Naive thymus-derived CD4-positive, alpha-beta T cell (primary cell): ENCODE measurements at regions of chr3 and their contacts with region 1.

Region 1: GRCh38 chr3:194134757-194135528 is 1.0 kb upstream of the HES1 start:
- DNase-seq: peak; percentile 66 to 84 (median 82)
- ATAC-seq: peak; percentile 79
- H3K4me3 ChIP-seq: peak overlapping the region; percentile 53
- H3K4me3 Mint-ChIP-seq: peak overlapping the region; percentile 84 to 93 (median 90)
- H3K27ac ChIP-seq: peak overlapping the region; percentile 8
- H3K27ac Mint-ChIP-seq: peak overlapping the region in 8 of 9 donors; percentile 79 to 94 (median 92)
- H3K4me1 ChIP-seq: peaks cover 25 to 42% of the 10 kb centered on the region in 2 donors
- H3K4me1 Mint-ChIP-seq: peaks cover 41 to 66% (median 50%) of the 10 kb centered on the region in 7 donors
- H3K27me3 ChIP-seq: peaks cover 6 to 8% of the 10 kb centered on the region in 2 donors
- H3K27me3 Mint-ChIP-seq: peaks cover 0 to 80% (median 34%) of the 10 kb centered on the region in 5 donors

Region 2: GRCh38 chr3:193592944-193593667 is 541.8 kb before region 1 on chr3 and contains the start of gene OPA1:
- CTCF ChIA-PET with region 1: no interaction called
- POLR2A ChIA-PET with region 1: no interaction called
- intact Hi-C with region 1: loop called (anchors 5 kb)
- DNase-seq: peak; percentile 73 to 91 (median 80)
- ATAC-seq: peak; percentile 96
- H3K4me3 ChIP-seq: peak within 1 kb of the TSS; percentile 78
- H3K4me3 Mint-ChIP-seq: peak within 1 kb of the TSS; percentile 93 to 98 (median 96)
- H3K27ac ChIP-seq: peak within 1 kb of the TSS; percentile 82
- H3K27ac Mint-ChIP-seq: peak within 1 kb of the TSS; percentile 92 to 98 (median 95)
- H3K4me1 ChIP-seq: peaks cover 18 to 20% of the 10 kb centered on the region in 2 donors
- H3K4me1 Mint-ChIP-seq: peaks cover 40 to 70% (median 59%) of the 10 kb centered on the region in 7 donors
- H3K27me3 ChIP-seq: no peaks in the 10 kb centered on the region
- H3K27me3 Mint-ChIP-seq: no peaks in the 10 kb centered on the region
- total RNA-seq, gene OPA1: 50.7 to 70.0 (median 59.4) TPM

Region 3: DNA sequence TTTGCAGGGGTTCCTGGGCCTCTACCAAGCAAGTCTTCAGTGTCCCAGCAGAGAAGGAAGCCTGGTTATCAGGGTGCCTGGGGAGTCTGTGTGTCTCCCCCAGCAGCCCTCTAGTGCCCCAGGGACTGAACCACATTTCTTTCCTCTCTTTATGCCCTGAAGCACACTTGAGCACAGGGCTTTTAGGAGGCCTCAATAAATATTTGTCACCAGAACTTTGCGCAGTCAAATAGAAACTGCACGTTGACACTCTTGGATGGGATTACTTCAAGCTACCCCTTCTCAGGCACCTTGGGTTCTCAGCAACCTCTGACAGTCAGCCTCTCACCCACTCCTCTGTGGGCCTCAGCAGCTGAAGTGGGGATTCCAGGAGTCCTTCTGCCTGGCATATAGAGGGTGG is 225.6 kb before region 1 on chr3:
- CTCF ChIA-PET with region 1: no interaction called
- POLR2A ChIA-PET with region 1: no interaction called
- intact Hi-C with region 1: no loop called
- DNase-seq: no peak
- ATAC-seq: no peak
- H3K4me3 ChIP-seq: no peak overlapping the region
- H3K4me3 Mint-ChIP-seq: no peak overlapping the region
- H3K27ac ChIP-seq: no peak overlapping the region
- H3K27ac Mint-ChIP-seq: peak overlapping the region in 4 of 9 donors; percentile 22 to 86 (median 50)
- H3K4me1 ChIP-seq: peaks cover 12 to 19% of the 10 kb centered on the region in 2 donors
- H3K4me1 Mint-ChIP-seq: peaks cover 12 to 41% (median 34%) of the 10 kb centered on the region in 7 donors
- H3K27me3 ChIP-seq: no peaks in the 10 kb centered on the region
- H3K27me3 Mint-ChIP-seq: peaks cover 0 to 6% (median 0%) of the 10 kb centered on the region in 5 donors

Region 4: DNA sequence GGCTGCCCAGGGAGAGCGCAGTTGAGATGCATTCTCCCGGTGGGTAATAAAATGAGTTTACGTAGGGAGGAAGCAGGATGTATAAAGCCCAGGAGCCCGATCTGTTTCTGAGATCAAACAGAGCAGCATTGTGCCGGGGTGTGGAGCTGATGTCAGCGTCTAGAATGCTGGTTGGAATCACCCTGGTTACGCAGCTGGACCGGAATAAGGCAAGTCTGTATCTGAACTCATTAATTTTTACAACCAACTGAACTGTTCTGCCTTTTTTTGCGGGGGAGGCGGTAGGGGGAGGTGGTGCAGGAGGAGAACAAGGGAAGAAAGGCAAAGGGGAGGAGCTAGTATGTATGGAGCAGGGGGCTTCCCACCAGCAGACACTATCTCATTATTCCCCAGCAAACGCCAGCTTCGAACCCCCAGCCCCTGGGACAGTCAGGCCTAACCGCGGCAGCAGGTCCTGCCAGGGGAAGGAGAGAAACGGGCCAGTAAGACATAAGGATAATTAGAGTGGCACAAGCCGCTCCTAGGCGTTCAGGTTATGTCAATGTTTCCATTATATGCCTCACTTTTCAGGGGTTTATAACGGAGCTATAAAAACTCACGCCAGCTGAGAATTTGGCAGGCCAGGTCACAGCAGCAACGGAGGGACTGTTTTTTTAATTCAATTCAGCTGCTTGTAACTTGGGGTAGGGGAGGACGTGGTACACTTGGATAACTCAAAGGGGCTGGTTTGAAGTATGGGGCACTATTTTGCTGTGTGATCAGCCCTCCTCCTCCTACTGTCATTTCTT is 174.3 kb before region 1 on chr3:
- CTCF ChIA-PET with region 1: no interaction called
- POLR2A ChIA-PET with region 1: no interaction called
- intact Hi-C with region 1: loop called in 1 of 2 experiments (anchors 10 kb)
- DNase-seq: no peak
- ATAC-seq: no peak
- H3K4me3 ChIP-seq: no peak overlapping the region
- H3K4me3 Mint-ChIP-seq: no peak overlapping the region
- H3K27ac ChIP-seq: no peak overlapping the region
- H3K27ac Mint-ChIP-seq: no peak overlapping the region
- H3K4me1 ChIP-seq: no peaks in the 10 kb centered on the region
- H3K4me1 Mint-ChIP-seq: peaks cover 0 to 30% (median 0%) of the 10 kb centered on the region in 7 donors
- H3K27me3 ChIP-seq: no peaks in the 10 kb centered on the region
- H3K27me3 Mint-ChIP-seq: peaks cover 28 to 53% (median 36%) of the 10 kb centered on the region in 5 donors

Region 5: GRCh38 chr3:194103983-194104751 is 30.8 kb before region 1 on chr3:
- CTCF ChIA-PET with region 1: no interaction called
- POLR2A ChIA-PET with region 1: no interaction called
- intact Hi-C with region 1: loop called in 1 of 2 experiments (anchors 1 kb)
- DNase-seq: no peak
- ATAC-seq: peak; percentile 39
- H3K4me3 ChIP-seq: no peak overlapping the region
- H3K4me3 Mint-ChIP-seq: peak overlapping the region in 1 of 10 donors; percentile 26
- H3K27ac ChIP-seq: no peak overlapping the region
- H3K27ac Mint-ChIP-seq: peak overlapping the region in 4 of 9 donors; percentile 35 to 81 (median 72)
- H3K4me1 ChIP-seq: peaks cover 0 to 6% of the 10 kb centered on the region in 2 donors
- H3K4me1 Mint-ChIP-seq: peaks cover 7 to 26% (median 8%) of the 10 kb centered on the region in 7 donors
- H3K27me3 ChIP-seq: no peaks in the 10 kb centered on the region
- H3K27me3 Mint-ChIP-seq: peaks cover 0 to 53% (median 0%) of the 10 kb centered on the region in 5 donors

Region 6: GRCh38 chr3:194306109-194306686 is 171.3 kb after region 1 on chr3:
- CTCF ChIA-PET with region 1: no interaction called
- POLR2A ChIA-PET with region 1: no interaction called
- intact Hi-C with region 1: loop called in 1 of 2 experiments (anchors 1 kb)
- DNase-seq: peak in 8 of 9 donors; percentile 49 to 75 (median 68)
- ATAC-seq: peak; percentile 81
- H3K4me3 ChIP-seq: peak overlapping the region; percentile 43
- H3K4me3 Mint-ChIP-seq: peak overlapping the region; percentile 66 to 82 (median 79)
- H3K27ac ChIP-seq: peak overlapping the region; percentile 60
- H3K27ac Mint-ChIP-seq: peak overlapping the region; percentile 71 to 93 (median 85)
- H3K4me1 ChIP-seq: peaks cover 23 to 27% of the 10 kb centered on the region in 2 donors
- H3K4me1 Mint-ChIP-seq: peaks cover 12 to 65% (median 40%) of the 10 kb centered on the region in 7 donors
- H3K27me3 ChIP-seq: no peaks in the 10 kb centered on the region
- H3K27me3 Mint-ChIP-seq: no peaks in the 10 kb centered on the region

Region 7: DNA sequence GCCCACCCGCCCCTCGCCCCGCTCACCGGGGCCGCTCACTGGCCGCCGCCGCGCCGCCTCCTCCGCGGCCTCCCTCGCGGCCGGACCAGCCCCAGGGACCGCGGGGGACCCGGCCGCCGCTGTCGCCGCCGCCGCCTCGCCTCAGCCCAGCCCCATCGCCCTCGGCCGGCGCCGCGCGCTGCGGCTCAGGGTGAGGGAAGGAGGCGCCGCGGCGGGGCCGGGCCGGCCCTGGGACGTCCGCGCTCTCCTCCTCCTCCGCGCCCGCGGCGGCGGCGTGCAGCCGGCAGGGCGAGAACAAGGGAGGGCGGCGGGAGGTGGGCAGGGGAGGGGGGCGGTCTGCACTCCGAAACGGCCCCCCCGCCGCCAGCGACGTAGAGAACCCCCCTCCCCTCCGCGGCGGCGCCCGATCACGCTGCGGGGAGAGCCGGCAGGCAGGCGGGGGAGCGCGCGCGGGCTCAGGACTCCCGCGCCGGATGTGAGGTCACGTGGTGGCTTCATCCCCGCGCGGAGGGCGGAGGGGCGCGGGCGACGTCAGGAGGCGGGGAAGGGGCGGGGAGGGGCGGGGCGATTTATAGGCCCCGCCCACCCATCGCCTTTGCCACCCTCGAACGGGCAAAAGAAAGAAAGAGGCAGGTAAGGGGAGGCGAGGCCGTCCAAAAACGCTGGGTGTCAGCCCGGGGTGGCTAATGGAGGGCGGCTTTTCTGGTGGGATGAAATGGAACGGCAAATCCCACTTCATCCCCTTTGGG is 351.8 kb after region 1 on chr3 and contains the start of gene ATP13A3:
- CTCF ChIA-PET with region 1: no interaction called
- POLR2A ChIA-PET with region 1: no interaction called
- intact Hi-C with region 1: loop called in 1 of 2 experiments (anchors 10 kb)
- DNase-seq: peak; percentile 84 to 93 (median 91)
- ATAC-seq: peak; percentile 93
- H3K4me3 ChIP-seq: peak within 1 kb of the TSS; percentile 83
- H3K4me3 Mint-ChIP-seq: peak within 1 kb of the TSS; percentile 83 to 98 (median 93)
- H3K27ac ChIP-seq: peak within 1 kb of the TSS; percentile 82
- H3K27ac Mint-ChIP-seq: peak within 1 kb of the TSS; percentile 82 to 96 (median 94)
- H3K4me1 ChIP-seq: peaks cover 20 to 25% of the 10 kb centered on the region in 2 donors
- H3K4me1 Mint-ChIP-seq: peaks cover 41 to 60% (median 45%) of the 10 kb centered on the region in 7 donors
- H3K27me3 ChIP-seq: no peaks in the 10 kb centered on the region
- H3K27me3 Mint-ChIP-seq: no peaks in the 10 kb centered on the region
- total RNA-seq, gene ATP13A3: 46.5 to 81.8 (median 58.4) TPM

Region 8: GRCh38 chr3:194769020-194769643 is 634.2 kb after region 1 on chr3:
- CTCF ChIA-PET with region 1: no interaction called
- POLR2A ChIA-PET with region 1: no interaction called
- intact Hi-C with region 1: loop called in 1 of 2 experiments (anchors 10 kb)
- DNase-seq: peak; percentile 59 to 98 (median 93)
- ATAC-seq: peak; percentile 99
- H3K4me3 ChIP-seq: peak overlapping the region; percentile 70
- H3K4me3 Mint-ChIP-seq: peak overlapping the region; percentile 77 to 95 (median 88)
- H3K27ac ChIP-seq: peak overlapping the region; percentile 78
- H3K27ac Mint-ChIP-seq: peak overlapping the region; percentile 57 to 98 (median 94)
- H3K4me1 ChIP-seq: peaks cover 6 to 9% of the 10 kb centered on the region in 2 donors
- H3K4me1 Mint-ChIP-seq: peaks cover 8 to 35% (median 23%) of the 10 kb centered on the region in 7 donors
- H3K27me3 ChIP-seq: no peaks in the 10 kb centered on the region
- H3K27me3 Mint-ChIP-seq: peaks cover 0 to 23% (median 7%) of the 10 kb centered on the region in 5 donors